CD4-positive, alpha-beta memory T cell (primary cell): ENCODE measurements at regions of chr14 and their contacts with region 1.

Region 1: GRCh38 chr14:54902521-54903420 is at the start of gene GCH1:
- DNase-seq: peak; percentile 73 to 83 (median 77)
- H3K4me3 ChIP-seq: peak within 1 kb of the TSS; percentile 37 to 99
- H3K4me3 Mint-ChIP-seq: peak within 1 kb of the TSS; percentile 90 to 96 (median 92)
- H3K27ac ChIP-seq: peak within 1 kb of the TSS; percentile 96
- H3K27ac Mint-ChIP-seq: peak within 1 kb of the TSS; percentile 89 to 96 (median 94)
- H3K4me1 ChIP-seq: peaks cover 27% of the 10 kb centered on the region
- H3K4me1 Mint-ChIP-seq: peaks cover 14 to 34% (median 26%) of the 10 kb centered on the region in 4 donors
- H3K27me3 ChIP-seq: no peaks in the 10 kb centered on the region
- H3K27me3 Mint-ChIP-seq: no peaks in the 10 kb centered on the region
- total RNA-seq, gene GCH1: 28.4 to 30.2 TPM

Region 2: DNA sequence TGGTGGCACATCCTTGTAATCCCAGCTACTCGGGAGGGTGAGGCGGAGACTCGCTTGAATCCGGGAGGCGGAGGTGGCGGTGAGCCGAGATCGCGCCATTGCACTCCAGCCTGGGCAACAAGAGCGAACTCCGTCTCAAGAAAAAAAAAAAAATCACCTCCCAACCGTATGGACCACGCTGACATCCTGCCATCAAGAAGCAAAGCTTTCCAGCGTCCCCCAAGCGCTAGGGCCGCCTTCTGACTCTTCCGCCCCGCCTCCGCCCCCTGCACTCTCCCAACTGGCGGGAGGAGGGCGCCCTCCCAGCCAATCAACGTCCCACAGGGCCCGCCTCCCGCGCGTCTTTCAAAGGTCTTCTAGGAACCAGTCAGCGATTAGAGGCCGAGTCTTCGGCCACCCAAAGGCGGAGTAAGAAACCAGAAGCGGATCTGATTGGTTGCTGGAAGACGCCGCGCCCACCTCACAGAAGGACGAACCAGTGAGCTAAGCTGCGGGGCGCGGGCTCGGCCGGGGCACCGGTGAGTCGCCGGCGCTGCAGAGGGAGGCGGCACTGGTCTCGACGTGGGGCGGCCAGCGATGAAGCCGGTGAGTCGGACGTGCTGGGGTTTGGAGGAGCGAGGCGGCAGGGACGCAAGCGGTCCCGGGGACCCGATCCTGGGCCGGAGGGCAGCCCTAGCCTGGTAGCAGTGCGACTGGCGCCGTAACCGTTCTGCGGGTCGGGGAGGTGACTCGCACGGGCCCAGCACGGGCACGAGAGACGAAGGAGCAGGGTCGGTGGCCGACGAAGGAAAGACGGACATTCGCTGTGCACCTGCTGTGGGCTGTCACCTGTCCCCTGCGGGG is 506.1 kb before region 1 on chr14 and contains the start of gene CDKN3:
- CTCF ChIA-PET with region 1: no interaction called
- POLR2A ChIA-PET with region 1: interaction called, 3 read pairs
- intact Hi-C with region 1: loop called (anchors 10 kb)
- DNase-seq: peak; percentile 97
- H3K4me3 ChIP-seq: peak within 1 kb of the TSS; percentile 69 to 73
- H3K4me3 Mint-ChIP-seq: peak within 1 kb of the TSS; percentile 87 to 92 (median 89)
- H3K27ac ChIP-seq: peak within 1 kb of the TSS; percentile 51
- H3K27ac Mint-ChIP-seq: peak within 1 kb of the TSS; percentile 57 to 96 (median 86)
- H3K4me1 ChIP-seq: peaks cover 18% of the 10 kb centered on the region
- H3K4me1 Mint-ChIP-seq: peaks cover 10 to 23% (median 15%) of the 10 kb centered on the region in 4 donors
- H3K27me3 ChIP-seq: no peaks in the 10 kb centered on the region
- H3K27me3 Mint-ChIP-seq: peaks cover under 1 to 3% of the 10 kb centered on the region in 2 donors
- total RNA-seq, gene CDKN3: 1.1 to 1.6 TPM

Region 3: DNA sequence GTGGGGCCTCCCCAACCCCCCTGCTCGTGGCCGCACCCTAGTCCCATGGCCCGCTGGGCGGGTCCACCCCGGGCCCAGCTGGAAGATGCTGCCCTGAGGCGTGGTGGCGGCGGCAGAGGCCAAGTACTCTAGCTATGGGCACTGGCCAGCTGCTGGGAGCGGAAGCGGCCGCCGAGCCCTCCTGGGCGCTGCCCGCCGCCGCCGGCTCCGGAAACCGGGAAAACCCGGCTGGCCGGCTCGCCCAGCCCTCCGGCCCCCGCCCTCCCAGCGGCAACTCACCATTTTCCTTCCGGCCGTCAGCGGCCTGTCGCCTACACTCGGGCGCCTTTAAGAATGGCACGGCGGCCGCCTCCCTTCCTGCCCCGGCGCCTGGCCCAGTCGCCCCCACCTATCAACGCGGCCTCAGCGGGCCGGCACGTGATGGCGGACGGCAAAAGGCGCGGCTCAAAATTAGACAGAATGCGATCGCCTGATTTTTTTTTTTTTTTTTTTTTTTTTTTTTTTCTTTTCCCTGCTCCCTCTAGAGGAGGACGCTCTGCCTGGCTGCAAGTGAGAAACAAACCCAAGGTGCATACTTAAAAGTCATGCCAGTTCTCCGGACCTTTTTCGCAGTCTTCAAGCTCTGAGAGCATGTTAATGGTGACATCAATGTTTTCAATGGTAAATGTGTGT is 414.0 kb before region 1 on chr14 and contains the start of gene GMFB:
- CTCF ChIA-PET with region 1: no interaction called
- POLR2A ChIA-PET with region 1: no interaction called
- intact Hi-C with region 1: loop called (anchors 5 kb)
- DNase-seq: peak; percentile 84 to 88 (median 87)
- H3K4me3 ChIP-seq: peak within 1 kb of the TSS; percentile 50 to 66
- H3K4me3 Mint-ChIP-seq: peak within 1 kb of the TSS; percentile 85 to 97 (median 94)
- H3K27ac ChIP-seq: peak within 1 kb of the TSS; percentile 80
- H3K27ac Mint-ChIP-seq: peak within 1 kb of the TSS; percentile 89 to 99 (median 97)
- H3K4me1 ChIP-seq: peaks cover 57% of the 10 kb centered on the region
- H3K4me1 Mint-ChIP-seq: peaks cover 48 to 70% (median 57%) of the 10 kb centered on the region in 4 donors
- H3K27me3 ChIP-seq: no peaks in the 10 kb centered on the region
- H3K27me3 Mint-ChIP-seq: no peaks in the 10 kb centered on the region
- total RNA-seq, gene GMFB: 31.1 to 36.4 TPM

Region 4: DNA sequence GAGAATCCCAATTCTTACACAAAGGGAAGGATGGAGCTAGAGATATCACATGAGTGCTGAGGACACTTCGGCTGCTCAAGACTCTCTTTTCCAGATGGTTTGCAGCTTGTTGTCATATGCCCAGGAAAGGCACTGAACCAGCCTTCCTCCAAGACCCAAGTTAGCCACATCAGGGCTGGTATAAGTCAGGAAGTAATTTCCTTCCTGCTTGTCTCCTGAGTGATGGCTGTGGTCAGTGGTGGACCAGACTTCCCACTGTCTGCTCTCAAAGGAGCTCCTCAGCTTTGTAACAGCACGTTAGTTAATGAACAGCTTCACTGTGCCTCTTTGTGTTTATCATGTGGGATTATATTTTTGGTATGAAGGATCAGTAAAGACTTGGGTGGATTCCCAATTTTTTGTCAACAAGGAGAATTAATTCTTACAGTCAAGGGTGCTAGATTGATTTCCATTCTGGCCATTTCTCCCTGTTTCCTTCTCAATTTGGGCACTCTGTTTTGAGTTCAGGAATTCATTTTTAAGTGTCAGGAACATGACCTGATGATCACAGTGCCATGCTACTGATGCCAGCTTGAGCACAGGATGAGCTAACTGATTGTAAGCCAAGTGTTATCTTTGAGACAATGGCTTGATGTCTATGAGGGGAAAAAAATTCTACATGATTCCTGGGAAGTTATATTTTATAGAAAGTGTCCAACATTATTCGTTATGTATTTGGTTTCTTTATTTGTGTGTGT is 145.9 kb before region 1 on chr14:
- CTCF ChIA-PET with region 1: no interaction called
- POLR2A ChIA-PET with region 1: no interaction called
- intact Hi-C with region 1: no loop called
- DNase-seq: no peak
- H3K4me3 ChIP-seq: no peak overlapping the region
- H3K4me3 Mint-ChIP-seq: peak overlapping the region in 3 of 8 donors; percentile 0 to 51 (median 44)
- H3K27ac ChIP-seq: no peak overlapping the region
- H3K27ac Mint-ChIP-seq: peak overlapping the region in 1 of 7 donors; percentile 36
- H3K4me1 ChIP-seq: peaks cover 14% of the 10 kb centered on the region
- H3K4me1 Mint-ChIP-seq: peaks cover 16 to 18% (median 16%) of the 10 kb centered on the region in 4 donors
- H3K27me3 ChIP-seq: no peaks in the 10 kb centered on the region
- H3K27me3 Mint-ChIP-seq: no peaks in the 10 kb centered on the region

Region 5: GRCh38 chr14:54805521-54806322 is 97.0 kb before region 1 on chr14:
- CTCF ChIA-PET with region 1: interaction called, 8 read pairs
- POLR2A ChIA-PET with region 1: no interaction called
- intact Hi-C with region 1: loop called (anchors 1 kb)
- DNase-seq: peak; percentile 55 to 64 (median 62)
- H3K4me3 ChIP-seq: no peak overlapping the region
- H3K4me3 Mint-ChIP-seq: peak overlapping the region in 2 of 8 donors; percentile 9 to 24
- H3K27ac ChIP-seq: no peak overlapping the region
- H3K27ac Mint-ChIP-seq: peak overlapping the region in 1 of 7 donors; percentile 4
- H3K4me1 ChIP-seq: no peaks in the 10 kb centered on the region
- H3K4me1 Mint-ChIP-seq: peaks cover 1 to 7% (median 5%) of the 10 kb centered on the region in 4 donors
- H3K27me3 ChIP-seq: no peaks in the 10 kb centered on the region
- H3K27me3 Mint-ChIP-seq: peaks cover 4 to 10% of the 10 kb centered on the region in 2 donors

Region 6: DNA sequence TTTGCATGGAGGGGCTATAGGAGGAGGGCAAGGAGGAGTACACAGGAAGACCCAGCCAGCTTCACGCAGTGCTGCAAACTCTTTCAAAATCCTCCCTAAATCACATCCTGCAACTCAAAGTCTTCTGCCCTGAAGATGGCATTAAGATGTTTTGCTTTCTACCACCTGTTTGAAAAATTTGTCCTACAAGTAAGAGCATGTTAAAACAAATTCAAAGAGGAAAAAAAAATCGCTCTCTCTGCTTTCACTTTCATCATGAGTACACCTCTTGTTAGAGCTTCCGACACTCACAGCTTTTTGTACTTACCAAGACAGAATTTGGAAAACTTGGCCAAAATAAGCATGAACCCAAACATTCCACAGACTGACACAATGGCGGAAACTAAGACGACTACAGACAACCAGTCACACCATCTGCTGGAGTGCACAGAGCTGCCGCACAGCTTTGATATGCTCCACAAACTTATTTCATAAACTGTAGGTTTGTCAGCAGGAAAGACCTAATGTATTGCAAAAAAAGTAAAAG is 21.5 kb before region 1 on chr14:
- CTCF ChIA-PET with region 1: interaction called, 41 read pairs
- POLR2A ChIA-PET with region 1: interaction called, 44 read pairs
- intact Hi-C with region 1: loop called (anchors 1 kb)
- DNase-seq: peak; percentile 46 to 65 (median 54)
- H3K4me3 ChIP-seq: peak overlapping the region; percentile 32 to 77
- H3K4me3 Mint-ChIP-seq: peak overlapping the region; percentile 82 to 95 (median 92)
- H3K27ac ChIP-seq: peak overlapping the region; percentile 59
- H3K27ac Mint-ChIP-seq: peak overlapping the region; percentile 80 to 98 (median 96)
- H3K4me1 ChIP-seq: peaks cover 45% of the 10 kb centered on the region
- H3K4me1 Mint-ChIP-seq: peaks cover 41 to 68% (median 47%) of the 10 kb centered on the region in 4 donors
- H3K27me3 ChIP-seq: no peaks in the 10 kb centered on the region
- H3K27me3 Mint-ChIP-seq: no peaks in the 10 kb centered on the region

Region 7: DNA sequence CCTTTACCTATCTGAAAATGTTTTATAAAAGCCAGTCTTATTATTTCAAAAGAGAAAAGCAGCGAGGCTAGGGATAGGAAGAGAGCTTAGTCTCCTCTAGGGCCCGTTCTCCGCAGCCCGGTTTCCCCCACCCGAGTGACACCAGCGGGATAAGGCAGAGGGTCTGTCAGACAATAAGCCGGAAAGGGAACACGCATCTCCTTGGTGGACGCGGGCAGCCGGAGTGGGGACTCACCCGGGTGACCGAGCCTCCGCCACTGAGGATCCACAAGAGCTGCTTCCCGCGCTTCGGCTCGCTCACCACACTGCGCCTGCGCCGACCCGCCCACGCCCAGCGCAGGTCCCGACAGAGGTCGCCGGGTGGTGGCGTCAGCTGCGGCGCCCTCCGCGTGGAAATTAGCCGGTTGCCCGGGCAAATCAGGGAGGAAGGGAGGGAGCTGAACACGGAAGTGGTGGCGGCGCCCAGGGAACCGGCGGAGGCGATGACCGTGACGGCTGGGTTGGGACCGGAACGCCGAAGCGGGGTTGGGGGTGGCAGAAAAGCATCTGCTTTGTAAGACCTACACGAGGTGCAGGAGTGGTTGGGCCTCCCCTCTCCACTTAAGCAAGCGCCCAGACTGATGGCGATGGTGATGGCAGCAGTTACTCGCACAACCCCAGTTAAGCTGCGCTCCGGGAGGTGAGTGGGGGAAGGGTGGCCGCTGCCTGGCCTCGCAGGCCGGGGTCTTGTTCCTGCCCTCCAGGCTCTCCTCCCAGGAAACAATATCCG is 124.2 kb after region 1 on chr14 and contains the starts of genes SOCS4 and WDHD1:
- CTCF ChIA-PET with region 1: no interaction called
- POLR2A ChIA-PET with region 1: interaction called, 12 read pairs
- intact Hi-C with region 1: loop called (anchors 2 kb)
- DNase-seq: peak; percentile 96 to 98 (median 97)
- H3K4me3 ChIP-seq: peak within 1 kb of the TSS; percentile 70 to 87
- H3K4me3 Mint-ChIP-seq: peak within 1 kb of the TSS; percentile 87 to 95 (median 94)
- H3K27ac ChIP-seq: peak within 1 kb of the TSS; percentile 89
- H3K27ac Mint-ChIP-seq: peak within 1 kb of the TSS; percentile 87 to 98 (median 96)
- H3K4me1 ChIP-seq: peaks cover 47% of the 10 kb centered on the region
- H3K4me1 Mint-ChIP-seq: peaks cover 37 to 56% (median 44%) of the 10 kb centered on the region in 4 donors
- H3K27me3 ChIP-seq: no peaks in the 10 kb centered on the region
- H3K27me3 Mint-ChIP-seq: no peaks in the 10 kb centered on the region
- total RNA-seq, gene SOCS4: 19.2 to 24.5 TPM
- total RNA-seq, gene WDHD1: 4.0 to 4.1 TPM

Region 8: GRCh38 chr14:55411426-55412389 is 508.9 kb after region 1 on chr14 and contains the start of gene ATG14:
- CTCF ChIA-PET with region 1: no interaction called
- POLR2A ChIA-PET with region 1: no interaction called
- intact Hi-C with region 1: no loop called
- DNase-seq: peak; percentile 65 to 76 (median 73)
- H3K4me3 ChIP-seq: peak within 1 kb of the TSS; percentile 90 to 93
- H3K4me3 Mint-ChIP-seq: peak within 1 kb of the TSS; percentile 88 to 94 (median 92)
- H3K27ac ChIP-seq: peak within 1 kb of the TSS; percentile 78
- H3K27ac Mint-ChIP-seq: peak within 1 kb of the TSS; percentile 45 to 96 (median 91)
- H3K4me1 ChIP-seq: peaks cover 24% of the 10 kb centered on the region
- H3K4me1 Mint-ChIP-seq: peaks cover 27 to 49% (median 38%) of the 10 kb centered on the region in 4 donors
- H3K27me3 ChIP-seq: no peaks in the 10 kb centered on the region
- H3K27me3 Mint-ChIP-seq: peaks cover 0 to 2% of the 10 kb centered on the region in 2 donors
- total RNA-seq, gene ATG14: 18.3 to 18.4 TPM

Region 9: GRCh38 chr14:55579724-55580469 is 677.1 kb after region 1 on chr14 and contains the start of gene KTN1:
- CTCF ChIA-PET with region 1: no interaction called
- POLR2A ChIA-PET with region 1: no interaction called
- intact Hi-C with region 1: loop called (anchors 10 kb)
- DNase-seq: peak; percentile 84 to 90 (median 87)
- H3K4me3 ChIP-seq: peak within 1 kb of the TSS; percentile 49 to 87
- H3K4me3 Mint-ChIP-seq: peak within 1 kb of the TSS; percentile 93 to 96 (median 94)
- H3K27ac ChIP-seq: peak within 1 kb of the TSS; percentile 64
- H3K27ac Mint-ChIP-seq: peak within 1 kb of the TSS; percentile 94 to 97 (median 95)
- H3K4me1 ChIP-seq: peaks cover 49% of the 10 kb centered on the region
- H3K4me1 Mint-ChIP-seq: peaks cover 24 to 28% (median 27%) of the 10 kb centered on the region in 4 donors
- H3K27me3 ChIP-seq: no peaks in the 10 kb centered on the region
- H3K27me3 Mint-ChIP-seq: no peaks in the 10 kb centered on the region
- total RNA-seq, gene KTN1: 126 to 133 TPM